ENCODE measurements at regions of chr14 and their contacts with region 1.

Region 1: DNA sequence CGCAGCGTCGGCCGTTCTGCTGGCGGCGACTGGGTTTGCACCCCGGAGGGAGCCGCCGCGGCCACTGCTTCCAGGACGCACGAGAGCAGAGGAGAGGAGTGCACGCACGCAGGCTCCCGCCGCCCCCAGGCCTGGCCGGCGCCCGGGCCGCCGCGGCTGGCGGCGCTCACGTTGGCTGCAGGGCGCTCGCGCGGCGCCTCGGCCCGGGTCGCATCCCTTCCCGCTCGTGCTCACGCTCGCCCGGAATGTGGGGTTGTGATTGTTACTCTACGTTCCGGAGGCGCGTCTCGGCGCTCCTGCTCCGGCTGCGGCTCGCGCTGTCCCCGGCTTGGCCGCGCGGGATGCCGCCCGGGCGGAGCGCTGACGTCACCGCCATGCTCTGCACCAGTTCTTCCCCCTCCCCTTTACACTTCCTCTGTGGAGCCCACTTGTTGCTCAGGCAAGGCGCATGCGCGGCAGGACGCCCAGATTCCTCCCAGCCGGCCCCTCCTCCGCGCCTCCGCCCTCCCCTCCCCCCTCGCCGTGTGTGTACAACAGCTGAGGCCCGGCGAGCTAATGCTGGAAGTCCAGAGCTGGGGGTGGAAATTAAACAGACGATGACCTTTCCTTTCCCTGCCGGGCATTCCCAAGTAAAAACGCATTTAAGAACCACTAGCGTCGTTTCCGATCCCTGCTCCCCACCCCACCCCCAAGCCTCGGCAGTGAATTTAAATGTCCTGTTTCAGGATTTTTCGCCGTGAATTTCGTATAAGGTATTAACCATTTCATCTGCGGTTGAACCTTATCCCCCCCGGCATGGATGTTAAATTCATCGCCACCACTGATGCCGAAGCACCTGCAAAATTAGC is at the start of gene IRF2BPL:
- DNase-seq: peak; percentile 99
- ATAC-seq: peak; percentile 74
- H3K4me3 ChIP-seq: peak within 1 kb of the TSS; percentile 73
- H3K27ac ChIP-seq: peak within 1 kb of the TSS; percentile 99
- H3K4me1 ChIP-seq: peaks cover 65% of the 10 kb centered on the region
- H3K27me3 ChIP-seq: no peaks in the 10 kb centered on the region
- CTCF ChIP-seq: no peak
- total RNA-seq, gene IRF2BPL: 50.6 TPM

Region 2: DNA sequence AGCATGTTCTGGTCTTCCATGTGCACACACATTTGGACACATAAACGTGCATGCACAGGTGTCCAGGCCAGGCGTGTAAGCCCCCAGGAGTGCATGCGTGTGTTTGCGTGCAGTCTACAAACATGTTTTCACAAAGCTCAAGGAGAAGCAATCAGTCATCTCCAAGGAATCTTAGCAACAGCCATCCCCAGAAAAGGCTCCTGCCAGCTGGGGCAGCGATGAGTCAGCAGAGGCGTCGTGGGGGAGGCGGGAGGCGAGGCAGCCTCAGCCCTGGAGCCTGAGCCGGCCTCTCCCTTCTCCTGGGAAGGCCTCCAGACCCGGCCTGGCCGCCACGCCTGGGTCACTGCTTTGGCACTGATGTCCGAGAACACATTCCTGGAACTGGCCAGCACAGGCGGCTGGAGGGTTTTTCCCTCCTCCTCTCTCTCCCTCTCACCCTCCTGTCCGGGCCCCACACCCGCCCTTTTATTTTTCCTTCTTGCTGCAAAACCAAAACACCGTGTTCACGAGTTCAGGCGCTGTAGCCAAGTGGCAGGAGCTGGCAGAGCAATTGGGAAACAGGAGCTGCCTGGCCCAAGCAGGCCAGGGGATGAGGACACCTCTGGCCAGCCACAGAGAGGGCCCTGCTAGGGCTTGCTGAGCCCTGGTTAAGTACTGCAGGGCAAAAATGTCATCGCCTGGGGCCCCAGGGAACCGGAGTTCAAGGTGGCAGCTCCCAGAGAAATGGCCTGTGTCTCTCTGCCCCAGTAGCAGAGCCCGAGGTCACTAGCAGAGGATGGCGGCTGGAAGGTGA is 109.7 kb before region 1 on chr14:
- intact Hi-C with region 1: loop called (anchors 10 kb)
- DNase-seq: peak; percentile 96
- ATAC-seq: peak; percentile 90
- H3K4me3 ChIP-seq: no peak overlapping the region
- H3K27ac ChIP-seq: peak overlapping the region; percentile 88
- H3K4me1 ChIP-seq: peaks cover 41% of the 10 kb centered on the region
- H3K27me3 ChIP-seq: no peaks in the 10 kb centered on the region
- CTCF ChIP-seq: peak; percentile 20

Region 3: DNA sequence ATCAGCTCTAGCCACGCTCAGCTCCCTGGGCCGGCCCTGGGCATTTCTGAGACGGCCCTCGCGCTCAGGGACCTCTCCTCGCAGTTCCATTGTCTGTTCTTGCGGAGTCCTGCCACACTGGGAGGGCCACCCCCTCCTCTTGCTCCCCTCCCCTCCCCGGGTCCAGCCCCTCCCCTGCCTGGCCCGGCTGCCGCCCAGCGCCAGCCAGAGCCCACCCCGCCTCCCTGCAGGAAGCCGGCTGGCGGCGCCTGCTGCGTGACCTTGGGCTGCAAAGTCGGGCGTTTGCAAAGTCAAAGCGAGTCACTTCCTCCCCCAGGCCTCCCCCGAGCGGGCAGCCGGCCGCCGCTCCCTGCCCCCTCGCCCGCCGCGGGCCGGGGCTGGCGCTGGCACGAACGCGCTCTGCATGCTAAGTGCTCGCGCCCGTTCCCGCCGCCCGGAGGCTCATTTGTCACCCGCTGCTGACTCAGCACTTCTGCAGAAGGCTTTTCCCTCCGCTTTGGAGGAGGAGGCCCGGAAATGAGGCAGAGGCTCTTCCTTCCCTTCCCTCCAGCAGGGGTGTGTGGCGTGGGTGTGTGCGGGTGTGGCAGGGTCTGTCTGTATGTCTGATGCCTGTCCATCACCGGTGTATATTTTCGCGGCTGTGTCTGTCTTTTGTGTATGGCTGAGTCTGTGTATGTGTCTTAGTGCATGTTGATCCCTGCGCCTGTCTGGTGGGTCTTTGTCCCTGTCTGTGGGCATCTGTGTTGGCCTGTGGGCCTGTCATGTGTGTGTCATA is 72.1 kb before region 1 on chr14:
- intact Hi-C with region 1: loop called (anchors 10 kb)
- DNase-seq: peak; percentile 94
- ATAC-seq: peak; percentile 87
- H3K4me3 ChIP-seq: peak overlapping the region; percentile 46
- H3K27ac ChIP-seq: peak overlapping the region; percentile 95
- H3K4me1 ChIP-seq: peaks cover 54% of the 10 kb centered on the region
- H3K27me3 ChIP-seq: no peaks in the 10 kb centered on the region
- CTCF ChIP-seq: peak; percentile 9